ENCODE measurements at regions of chr5 and their contacts with region 1.

Region 1: GRCh38 chr5:167723254-167723871 is 568.1 kb upstream of the WWC1 start:
- DNase-seq: peak; percentile 68
- H3K4me3 ChIP-seq: no peak overlapping the region
- H3K27ac ChIP-seq: no peak overlapping the region
- H3K4me1 ChIP-seq: no peaks in the 10 kb centered on the region
- H3K27me3 ChIP-seq: no peaks in the 10 kb centered on the region
- CTCF ChIP-seq: peak; percentile 81 to 93 (median 90)
- EP300 ChIP-seq: no peak
- POLR2A ChIP-seq: no peak

Region 2: DNA sequence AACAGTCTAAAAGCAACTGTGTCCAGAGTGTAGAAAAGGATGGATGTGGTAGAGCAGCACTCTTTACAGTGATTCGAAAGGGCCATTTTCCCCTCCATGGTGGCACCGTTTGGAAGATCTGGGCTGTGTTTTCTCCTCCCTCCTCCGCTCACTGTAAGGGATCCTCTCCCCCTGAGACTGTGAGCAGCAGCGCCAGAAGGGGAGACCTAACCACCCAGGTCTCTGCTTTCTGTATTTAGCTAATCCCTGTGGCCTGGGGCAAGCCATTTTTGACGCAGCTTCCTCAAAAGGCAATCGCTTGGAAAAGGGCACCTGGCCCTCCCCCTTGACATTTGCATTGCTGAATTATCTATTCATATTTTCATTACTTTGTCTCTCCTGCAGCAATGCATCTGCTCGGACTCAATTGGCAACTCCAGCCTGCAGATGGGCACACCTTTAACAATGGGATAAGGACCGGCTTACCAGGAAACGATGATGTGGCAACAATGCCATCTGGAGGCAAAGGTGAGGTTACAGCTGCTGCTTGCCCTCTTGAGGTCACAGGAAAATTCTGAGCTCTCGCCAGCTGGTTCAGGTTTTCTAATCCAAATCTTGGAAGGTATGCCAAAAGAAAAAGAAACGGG is 323.8 kb after region 1 on chr5:
- in situ Hi-C with region 1: loop called in 3 of 4 experiments (anchors 10 to 25 kb)
- intact Hi-C with region 1: loop called (anchors 5 kb)
- DNase-seq: peak; percentile 63
- H3K4me3 ChIP-seq: no peak overlapping the region
- H3K27ac ChIP-seq: no peak overlapping the region
- H3K4me1 ChIP-seq: peaks cover 0 to 7% (median 0%) of the 10 kb centered on the region in 4 donors
- H3K27me3 ChIP-seq: no peaks in the 10 kb centered on the region
- CTCF ChIP-seq: peak; percentile 43 to 57 (median 51)
- EP300 ChIP-seq: no peak
- POLR2A ChIP-seq: no peak

Region 3: GRCh38 chr5:168057905-168058304 is 334.5 kb after region 1 on chr5:
- in situ Hi-C with region 1: loop called in 1 of 4 experiments (anchors 10 kb)
- intact Hi-C with region 1: no loop called
- DNase-seq: no peak
- H3K4me3 ChIP-seq: no peak overlapping the region
- H3K27ac ChIP-seq: no peak overlapping the region
- H3K4me1 ChIP-seq: no peaks in the 10 kb centered on the region
- H3K27me3 ChIP-seq: no peaks in the 10 kb centered on the region
- CTCF ChIP-seq: no peak
- EP300 ChIP-seq: no peak
- POLR2A ChIP-seq: no peak

Measured in transverse colon (tissue), 4 donors.